Transverse colon (tissue), 4 donors: ENCODE measurements at regions of chr16 and their contacts with region 1.

Region 1: DNA sequence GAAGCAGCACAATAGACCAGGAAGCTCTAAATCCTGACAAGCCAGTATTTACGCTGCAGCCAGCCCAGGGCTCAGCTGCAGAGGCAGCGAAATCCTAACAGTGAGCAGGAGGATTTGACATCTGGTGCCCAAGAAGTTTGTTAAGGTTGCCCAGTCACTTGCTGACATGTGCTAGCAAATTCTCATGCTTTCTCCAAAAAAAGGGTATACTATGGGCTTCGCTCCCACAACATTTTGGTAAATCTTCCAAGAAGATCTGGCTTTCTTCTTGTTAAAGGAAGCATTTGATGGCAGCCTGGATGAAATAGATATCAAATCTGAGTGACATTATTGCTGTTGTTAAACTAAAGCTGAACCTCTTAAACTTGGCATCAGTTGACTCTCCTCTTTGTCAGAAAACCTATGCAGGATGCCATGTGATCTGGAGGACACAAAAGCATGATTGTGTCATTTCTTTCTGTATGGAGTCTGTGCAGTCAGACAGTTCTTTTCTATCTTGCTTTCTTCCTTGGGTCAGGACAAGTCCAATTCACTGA is 949.7 kb upstream of the RBFOX1 start:
- DNase-seq: no peak
- H3K4me3 ChIP-seq: no peak overlapping the region
- H3K27ac ChIP-seq: no peak overlapping the region
- H3K4me1 ChIP-seq: no peaks in the 10 kb centered on the region
- H3K27me3 ChIP-seq: no peaks in the 10 kb centered on the region
- CTCF ChIP-seq: no peak
- EP300 ChIP-seq: no peak
- POLR2A ChIP-seq: no peak

Region 2: GRCh38 chr16:6406028-6406427 is 23.0 kb after region 1 on chr16:
- in situ Hi-C with region 1: no loop called
- intact Hi-C with region 1: no loop called
- DNase-seq: no peak
- H3K4me3 ChIP-seq: no peak overlapping the region
- H3K27ac ChIP-seq: no peak overlapping the region
- H3K4me1 ChIP-seq: no peaks in the 10 kb centered on the region
- H3K27me3 ChIP-seq: no peaks in the 10 kb centered on the region
- CTCF ChIP-seq: no peak
- EP300 ChIP-seq: no peak
- POLR2A ChIP-seq: no peak

Region 3: DNA sequence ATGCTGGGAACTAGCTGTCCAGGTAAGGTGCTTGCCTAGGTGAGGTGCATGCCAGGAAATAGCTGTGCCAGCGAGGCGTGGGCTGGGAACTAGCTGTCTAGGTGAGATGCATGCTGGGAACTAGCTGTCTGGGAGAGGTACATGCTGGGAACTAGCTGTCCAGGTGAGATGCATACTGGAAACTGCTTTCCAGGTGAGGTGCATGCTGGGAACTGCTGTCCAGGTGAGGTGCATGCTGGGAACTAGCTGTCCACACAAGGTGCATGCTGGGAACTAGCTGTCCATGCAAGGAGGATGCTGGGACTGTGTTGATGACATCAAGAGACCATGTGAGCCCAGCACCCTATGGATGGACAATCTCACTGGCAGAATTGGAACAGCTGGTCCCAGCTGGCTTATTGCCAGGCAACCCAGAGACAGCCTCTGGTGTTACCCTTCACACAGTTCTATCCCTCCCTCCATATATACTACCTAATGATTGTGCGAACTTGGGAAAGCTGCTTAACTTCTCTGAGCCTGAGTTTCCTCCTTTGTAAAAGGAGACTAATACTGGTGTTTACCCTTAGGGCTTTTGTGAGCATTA is 469.7 kb after region 1 on chr16:
- in situ Hi-C with region 1: no loop called
- intact Hi-C with region 1: no loop called
- DNase-seq: no peak
- H3K4me3 ChIP-seq: no peak overlapping the region
- H3K27ac ChIP-seq: no peak overlapping the region
- H3K4me1 ChIP-seq: no peaks in the 10 kb centered on the region
- H3K27me3 ChIP-seq: no peaks in the 10 kb centered on the region
- CTCF ChIP-seq: no peak
- EP300 ChIP-seq: no peak
- POLR2A ChIP-seq: no peak

Region 4: DNA sequence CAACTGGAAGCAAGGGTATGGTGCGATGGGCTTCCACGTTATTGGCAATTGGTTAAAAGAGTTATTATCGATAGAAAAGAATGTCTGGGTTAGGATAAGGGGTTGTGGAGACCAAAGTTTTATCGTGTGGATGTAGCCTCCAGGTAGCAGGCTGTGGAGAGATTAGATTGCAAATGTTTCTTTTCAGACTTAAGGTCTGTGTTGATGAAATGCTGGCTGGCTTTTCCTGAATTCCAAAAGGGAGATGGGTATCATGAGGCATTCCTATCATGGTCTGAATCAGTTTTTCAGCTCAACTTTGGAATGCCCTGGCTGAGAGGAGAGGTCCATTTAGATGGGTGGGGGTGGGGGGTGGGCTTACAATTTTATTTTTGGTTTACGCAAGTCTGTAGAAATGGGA is 554.6 kb after region 1 on chr16:
- in situ Hi-C with region 1: no loop called
- intact Hi-C with region 1: loop called (anchors 5 kb)
- DNase-seq: no peak
- H3K4me3 ChIP-seq: no peak overlapping the region
- H3K27ac ChIP-seq: no peak overlapping the region
- H3K4me1 ChIP-seq: no peaks in the 10 kb centered on the region
- H3K27me3 ChIP-seq: no peaks in the 10 kb centered on the region
- CTCF ChIP-seq: no peak
- EP300 ChIP-seq: no peak
- POLR2A ChIP-seq: no peak